H1 (cell line): ENCODE measurements at regions of chr19 and their contacts with region 1.

Region 1: DNA sequence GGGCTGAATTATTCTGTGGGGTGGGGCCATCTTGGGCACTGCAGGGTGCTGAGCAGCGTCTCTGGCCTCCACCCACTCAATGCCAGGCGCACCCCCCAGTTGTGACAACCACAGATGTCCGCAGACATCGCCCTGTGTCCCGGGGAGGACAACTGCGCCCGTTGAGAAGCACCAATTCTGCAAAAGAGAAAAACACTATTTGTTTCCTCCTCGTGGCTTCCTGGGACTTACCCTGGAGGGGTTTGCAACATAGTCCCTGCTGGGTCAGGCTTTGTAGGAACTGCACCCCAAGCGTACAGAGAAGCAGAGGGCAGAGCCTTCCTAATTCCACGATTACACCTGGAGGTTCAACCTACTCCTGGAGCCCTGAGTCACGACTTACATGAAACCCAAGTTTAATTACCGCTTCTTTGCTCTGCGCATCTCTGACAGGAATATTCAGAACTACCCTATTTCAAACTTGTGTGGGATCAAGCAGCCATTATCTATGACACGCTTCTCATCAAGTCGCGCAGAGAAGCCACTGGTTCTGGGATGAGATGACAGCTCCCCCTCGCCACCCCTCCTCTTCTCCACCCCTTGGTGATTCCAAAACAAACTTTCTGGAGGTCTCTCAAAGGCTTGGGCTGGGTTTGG is 11.1 kb upstream of the SLC39A3 start:
- DNase-seq: no peak
- H3K4me3 ChIP-seq: no peak overlapping the region
- H3K27ac ChIP-seq: no peak overlapping the region
- H3K4me1 ChIP-seq: no peaks in the 10 kb centered on the region
- H3K27me3 ChIP-seq: peaks cover 0 to 8% (median 2%) of the 10 kb centered on the region in 4 experiments; a peak in 2 of 7 replicates
- CTCF ChIP-seq: no peak
- EP300 ChIP-seq: no peak
- POLR2A ChIP-seq: no peak
- RAD21 ChIP-seq: no peak

Region 2: DNA sequence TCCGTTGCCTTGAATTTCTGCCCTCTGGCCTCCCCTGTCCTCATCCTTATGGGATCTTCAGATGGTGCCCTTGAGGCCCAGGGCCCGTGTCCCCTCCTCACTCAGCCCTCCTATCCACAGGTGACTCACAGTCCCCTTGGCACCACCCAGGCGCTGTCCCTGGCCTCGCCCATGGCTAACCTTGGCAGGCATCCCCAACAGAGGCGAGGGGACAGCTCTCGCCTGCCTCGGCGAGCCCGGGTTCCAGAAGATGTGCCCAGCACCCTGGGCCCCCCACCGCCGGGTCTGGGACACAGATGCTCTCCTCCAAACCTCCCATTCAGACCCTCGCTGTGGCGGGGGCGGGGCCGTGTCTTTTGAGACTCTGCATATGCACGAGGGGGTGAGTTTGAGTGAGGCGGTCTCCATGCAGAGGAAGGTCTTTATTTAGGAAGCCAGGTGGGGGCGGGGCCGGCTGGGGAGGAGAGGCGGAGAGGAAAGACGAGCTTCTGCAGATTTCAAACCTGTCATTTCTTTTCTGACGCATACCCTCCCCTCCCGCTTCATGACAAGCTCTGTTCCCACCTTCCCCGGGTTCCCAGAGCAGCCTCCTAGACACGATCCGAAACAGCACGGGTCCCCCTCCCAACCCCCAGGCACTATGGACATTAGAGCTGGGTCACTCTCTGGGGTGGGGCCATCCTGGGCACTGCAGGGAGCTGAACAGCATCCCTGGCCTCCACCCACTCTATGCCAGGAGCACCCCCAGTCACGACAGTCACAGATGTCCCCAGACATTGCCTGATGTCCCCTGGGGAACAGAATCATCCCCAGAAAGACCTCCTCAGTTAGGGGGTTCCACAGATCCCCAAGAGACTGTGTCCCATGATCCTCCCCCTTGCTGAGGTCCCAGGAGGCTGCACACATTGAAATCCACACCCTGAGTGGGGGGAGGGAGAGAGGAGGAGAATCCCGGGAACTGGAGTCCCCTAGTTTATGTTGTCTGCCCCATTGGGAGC is 96.9 kb before region 1 on chr19:
- CTCF ChIA-PET with region 1: interaction called, 117 read pairs
- POLR2A ChIA-PET with region 1: interaction called, 10 read pairs
- DNase-seq: peak in 1 of 2 experiments; percentile 68
- H3K4me3 ChIP-seq: peak overlapping the region in 3 of 4 experiments; percentile 28 to 49 (median 29); a peak in 5 of 8 replicates
- H3K27ac ChIP-seq: no peak overlapping the region
- H3K4me1 ChIP-seq: peaks cover 0 to 10% (median 6%) of the 10 kb centered on the region in 4 experiments; a peak in 5 of 7 replicates
- H3K27me3 ChIP-seq: no peaks in the 10 kb centered on the region
- CTCF ChIP-seq: no peak
- EP300 ChIP-seq: no peak
- POLR2A ChIP-seq: no peak
- RAD21 ChIP-seq: no peak

Region 3: DNA sequence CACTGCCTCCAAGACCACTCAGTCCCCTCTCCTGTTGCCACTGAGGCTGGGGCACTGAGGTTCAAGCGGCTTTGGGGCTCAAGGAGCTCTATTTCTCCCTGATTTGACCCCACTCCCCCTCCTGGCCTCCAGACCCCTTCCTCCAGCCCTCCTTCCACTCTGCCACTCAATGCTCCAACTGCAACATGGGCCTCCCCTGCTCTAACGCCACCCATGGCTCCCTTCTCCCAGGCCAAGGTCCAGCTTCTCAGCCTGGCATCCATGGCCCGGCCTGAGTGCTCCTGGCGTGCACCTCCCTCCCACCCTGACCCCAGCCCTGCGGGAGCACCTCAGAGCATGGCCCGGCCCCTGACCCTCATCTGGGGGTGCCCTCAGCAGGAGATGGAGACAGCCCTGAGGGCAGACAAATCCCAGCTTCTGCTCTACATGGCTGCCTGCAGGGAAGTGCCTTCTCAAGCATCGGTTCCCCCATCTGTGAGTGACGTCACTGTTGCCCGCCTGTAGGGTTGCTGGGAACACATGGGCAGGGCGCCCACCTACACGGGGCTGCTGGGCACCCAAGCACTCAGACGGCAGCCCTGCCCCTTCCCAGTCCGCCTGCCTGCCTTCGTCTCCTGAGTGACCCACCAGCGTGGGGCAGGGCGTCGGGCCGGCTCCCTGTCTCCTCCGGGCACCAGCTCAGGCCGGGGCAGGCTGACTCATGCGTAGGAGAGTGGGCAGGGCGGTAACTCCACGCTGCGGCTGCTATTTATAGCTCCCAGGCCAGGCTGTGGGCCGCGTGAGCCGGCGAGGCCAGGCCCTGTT is 28.2 kb before region 1 on chr19:
- CTCF ChIA-PET with region 1: interaction called, 14 read pairs
- POLR2A ChIA-PET with region 1: no interaction called
- DNase-seq: no peak
- H3K4me3 ChIP-seq: no peak overlapping the region; a peak in 1 of 8 replicates
- H3K27ac ChIP-seq: no peak overlapping the region
- H3K4me1 ChIP-seq: peaks cover 0 to 20% (median 6%) of the 10 kb centered on the region in 4 experiments; a peak in 6 of 7 replicates
- H3K27me3 ChIP-seq: peaks cover 0 to 7% (median 3%) of the 10 kb centered on the region in 4 experiments; a peak in 4 of 7 replicates
- CTCF ChIP-seq: no peak
- EP300 ChIP-seq: no peak
- POLR2A ChIP-seq: no peak
- RAD21 ChIP-seq: no peak

Region 4: GRCh38 chr19:2739602-2740313 is 11.2 kb before region 1 on chr19 and contains the start of gene SLC39A3:
- CTCF ChIA-PET with region 1: interaction called, 13 read pairs
- POLR2A ChIA-PET with region 1: no interaction called
- DNase-seq: peak; percentile 96 to 100
- H3K4me3 ChIP-seq: peak within 1 kb of the TSS; percentile 79 to 96 (median 84)
- H3K27ac ChIP-seq: no peak within 1 kb of the TSS
- H3K4me1 ChIP-seq: no peaks in the 10 kb centered on the region
- H3K27me3 ChIP-seq: no peaks in the 10 kb centered on the region
- CTCF ChIP-seq: no peak; a peak in 1 of 4 replicates
- EP300 ChIP-seq: peak in 1 of 2 experiments; percentile 89; a peak in 2 of 3 replicates
- POLR2A ChIP-seq: no peak; a peak in 1 of 3 replicates
- RAD21 ChIP-seq: peak in 1 of 2 experiments; percentile 42; a peak in 2 of 4 replicates
- total RNA-seq, gene SLC39A3: 33.0 and 35.8 TPM in 2 replicates

Region 5: GRCh38 chr19:2775556-2776430 is 24.9 kb after region 1 on chr19:
- CTCF ChIA-PET with region 1: interaction called, 16 read pairs
- POLR2A ChIA-PET with region 1: interaction called, 3 read pairs
- DNase-seq: no peak
- H3K4me3 ChIP-seq: no peak overlapping the region
- H3K27ac ChIP-seq: no peak overlapping the region
- H3K4me1 ChIP-seq: no peaks in the 10 kb centered on the region; a peak in 1 of 7 replicates
- H3K27me3 ChIP-seq: no peaks in the 10 kb centered on the region
- CTCF ChIP-seq: no peak
- EP300 ChIP-seq: no peak
- POLR2A ChIP-seq: no peak
- RAD21 ChIP-seq: no peak

Region 6: DNA sequence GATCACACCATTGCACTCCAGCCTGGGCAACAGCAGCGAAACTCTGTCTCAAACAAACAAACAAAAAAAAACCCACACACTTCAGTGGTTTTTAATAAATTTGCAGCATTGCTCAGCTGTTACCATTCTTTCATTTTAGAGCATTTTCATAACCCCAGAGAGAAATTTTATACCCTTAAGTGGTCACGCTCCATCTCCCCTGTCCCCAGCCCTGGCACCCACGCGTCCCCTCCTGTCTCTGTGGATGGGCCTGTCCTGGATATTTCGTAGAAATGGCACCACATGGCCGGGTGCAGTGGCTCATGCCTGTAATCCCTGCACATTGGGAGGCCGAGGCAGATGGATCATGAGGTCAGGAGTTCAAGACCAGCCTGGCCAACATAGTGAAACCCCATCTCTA is 42.2 kb after region 1 on chr19:
- CTCF ChIA-PET with region 1: no interaction called
- POLR2A ChIA-PET with region 1: no interaction called
- DNase-seq: no peak
- H3K4me3 ChIP-seq: no peak overlapping the region
- H3K27ac ChIP-seq: no peak overlapping the region
- H3K4me1 ChIP-seq: no peaks in the 10 kb centered on the region; a peak in 1 of 7 replicates
- H3K27me3 ChIP-seq: no peaks in the 10 kb centered on the region; a peak in 1 of 7 replicates
- CTCF ChIP-seq: no peak
- EP300 ChIP-seq: no peak
- POLR2A ChIP-seq: no peak
- RAD21 ChIP-seq: no peak

Region 7: GRCh38 chr19:2840794-2841790 is 90.2 kb after region 1 on chr19 and contains the start of gene ZNF555:
- CTCF ChIA-PET with region 1: no interaction called
- POLR2A ChIA-PET with region 1: no interaction called
- DNase-seq: peak; percentile 95 to 97
- H3K4me3 ChIP-seq: peak within 1 kb of the TSS; percentile 53 to 76 (median 67)
- H3K27ac ChIP-seq: peak within 1 kb of the TSS; percentile 63; the same call in 1 of the 2 replicates
- H3K4me1 ChIP-seq: no peaks in the 10 kb centered on the region; a peak in 3 of 7 replicates
- H3K27me3 ChIP-seq: peaks cover 0 to 6% (median 2%) of the 10 kb centered on the region in 4 experiments; a peak in 3 of 7 replicates
- CTCF ChIP-seq: peak; percentile 33 to 59 (median 51)
- EP300 ChIP-seq: no peak
- POLR2A ChIP-seq: no peak
- RAD21 ChIP-seq: no peak; a peak in 2 of 4 replicates
- total RNA-seq, gene ZNF555: 5.4 and 5.7 TPM in 2 replicates